Breast epithelium (tissue), 4 donors: ENCODE measurements at regions of chr16 and their contacts with region 1.

Region 1: DNA sequence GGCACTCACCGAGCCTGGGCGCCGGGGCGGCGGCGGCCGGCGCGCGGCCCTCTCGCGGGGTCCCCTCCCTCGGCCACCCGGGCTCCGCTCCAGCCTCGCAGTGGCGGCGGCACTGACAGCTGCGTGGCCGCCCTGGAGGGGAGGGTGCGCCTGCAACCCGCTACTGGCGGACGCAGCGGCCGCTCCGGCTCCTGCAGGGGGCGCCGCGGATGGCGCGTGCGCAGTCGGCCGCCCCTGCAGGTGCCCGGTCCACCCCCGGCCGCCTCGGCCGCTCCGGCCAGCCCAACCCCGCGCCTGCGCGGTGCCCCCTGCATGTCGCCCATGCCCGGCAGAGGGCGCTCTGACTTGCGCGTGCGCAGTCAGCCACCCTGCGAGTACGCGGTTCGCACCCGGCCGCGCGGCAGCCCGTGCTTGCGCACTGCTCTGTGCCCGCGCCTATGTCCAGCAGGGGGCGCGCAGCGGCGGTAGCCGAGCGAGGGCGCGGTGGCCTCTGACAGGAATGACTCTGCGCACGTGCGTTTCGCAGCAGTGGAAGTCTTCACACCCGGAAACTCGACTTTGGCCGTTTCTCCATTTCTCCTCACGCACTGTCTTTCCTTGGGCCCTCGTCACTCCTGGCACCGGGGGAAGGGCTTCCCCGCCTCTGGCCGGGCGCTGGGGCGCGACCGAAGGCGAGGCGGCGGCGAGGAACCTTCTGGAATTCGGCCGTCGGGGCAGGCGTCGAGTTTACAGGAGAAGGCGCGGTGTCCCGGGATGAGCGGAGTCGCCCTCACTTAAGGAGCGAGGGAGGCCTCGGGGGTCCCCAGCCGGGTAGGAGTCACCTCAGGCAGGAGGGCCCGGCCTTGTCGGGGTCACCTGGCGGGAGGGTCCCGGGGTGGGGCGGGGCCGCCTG is at the start of gene ABCA3:
- DNase-seq: peak; percentile 86 to 93
- H3K4me3 ChIP-seq: peak within 1 kb of the TSS; percentile 71 to 87 (median 74)
- H3K27ac ChIP-seq: peak within 1 kb of the TSS in 1 of 2 donors; percentile 48
- H3K4me1 ChIP-seq: peaks cover 0 to 5% of the 10 kb centered on the region in 2 donors
- H3K27me3 ChIP-seq: no peaks in the 10 kb centered on the region
- CTCF ChIP-seq: peak; percentile 98 to 100 (median 98)
- POLR2A ChIP-seq: no peak
- total RNA-seq, gene ABCA3: 6.2 to 7.8 (median 6.3) TPM

Region 2: GRCh38 chr16:2388875-2389433 is 48.1 kb after region 1 on chr16:
- intact Hi-C with region 1: no loop called
- DNase-seq: no peak
- H3K4me3 ChIP-seq: no peak overlapping the region
- H3K27ac ChIP-seq: no peak overlapping the region
- H3K4me1 ChIP-seq: no peaks in the 10 kb centered on the region
- H3K27me3 ChIP-seq: no peaks in the 10 kb centered on the region
- CTCF ChIP-seq: no peak
- POLR2A ChIP-seq: no peak

Region 3: GRCh38 chr16:2429034-2429770 is 88.4 kb after region 1 on chr16 and contains the start of gene CCNF:
- intact Hi-C with region 1: loop called (anchors 10 kb)
- DNase-seq: peak; percentile 96 to 98
- H3K4me3 ChIP-seq: peak within 1 kb of the TSS; percentile 72 to 99 (median 87)
- H3K27ac ChIP-seq: peak within 1 kb of the TSS; percentile 77 to 90
- H3K4me1 ChIP-seq: peaks cover 5 to 6% of the 10 kb centered on the region in 2 donors
- H3K27me3 ChIP-seq: no peaks in the 10 kb centered on the region
- CTCF ChIP-seq: no peak
- POLR2A ChIP-seq: peak; percentile 41
- total RNA-seq, gene CCNF: 1.6 to 2.9 (median 2.7) TPM

Region 4: GRCh38 chr16:2816751-2817339 is 476.0 kb after region 1 on chr16 and contains the start of gene PRSS21:
- intact Hi-C with region 1: no loop called
- DNase-seq: peak in 1 of 2 donors; percentile 43
- H3K4me3 ChIP-seq: peak within 1 kb of the TSS in 2 of 3 donors; percentile 37 to 53
- H3K27ac ChIP-seq: no peak within 1 kb of the TSS
- H3K4me1 ChIP-seq: peaks cover 1 to 5% of the 10 kb centered on the region in 2 donors
- H3K27me3 ChIP-seq: no peaks in the 10 kb centered on the region
- CTCF ChIP-seq: no peak
- POLR2A ChIP-seq: no peak
- total RNA-seq, gene PRSS21: 2.9 to 4.9 TPM in 2 of 3 donors, not detected in the other